Activated CD4-positive, alpha-beta T cell treated with anti-CD3 and anti-CD28 coated beads, Interleukin-2, amount 10 ng/mL, durations not matched to agents 24 days and 14 days (primary cell): ENCODE measurements at regions of chr18 and their contacts with region 1.

Region 1: GRCh38 chr18:57833443-57834101 is 30.5 kb upstream of the ATP8B1 start:
- DNase-seq: peak; percentile 74
- H3K4me3 Mint-ChIP-seq: peak overlapping the region; percentile 70
- H3K27ac Mint-ChIP-seq: peak overlapping the region; percentile 46
- H3K4me1 Mint-ChIP-seq: peaks cover 31% of the 10 kb centered on the region
- H3K27me3 Mint-ChIP-seq: peaks cover 15% of the 10 kb centered on the region

Region 2: DNA sequence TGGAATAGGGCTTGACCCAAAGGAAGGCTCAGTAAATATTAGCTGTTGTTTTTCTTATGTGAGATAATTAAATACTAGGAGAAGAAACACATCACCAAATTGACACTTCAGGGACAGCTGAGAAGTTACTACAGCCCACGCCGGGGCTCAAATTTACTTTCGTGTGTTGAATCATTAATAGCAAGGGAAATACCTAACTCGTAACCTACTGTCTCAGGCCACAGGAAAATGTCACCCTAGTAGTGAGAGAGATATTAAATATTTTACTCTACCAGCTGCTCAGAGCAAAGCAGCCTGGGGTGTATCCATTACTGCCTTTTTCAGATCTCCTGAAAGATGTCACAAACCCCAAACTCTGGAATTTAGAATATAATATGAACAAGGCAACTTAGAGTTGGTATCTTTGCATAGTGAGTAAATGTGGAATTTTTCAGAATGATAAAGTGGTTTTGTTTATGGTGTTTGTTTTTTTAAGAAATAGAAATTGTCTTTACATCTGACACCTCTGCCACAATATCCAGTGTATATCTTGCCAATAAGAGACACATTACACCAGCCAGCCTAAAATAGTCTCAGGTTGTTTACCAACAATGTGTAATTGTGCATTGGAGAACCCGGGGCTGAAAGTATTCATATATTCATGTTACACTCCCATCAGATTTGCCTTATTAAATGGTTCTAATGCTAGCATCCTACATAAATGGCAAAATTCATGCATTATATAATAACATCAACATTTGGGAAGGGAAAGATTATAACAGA is 78.8 kb before region 1 on chr18:
- intact Hi-C with region 1: loop called (anchors 5 kb)
- DNase-seq: no peak
- H3K4me3 Mint-ChIP-seq: no peak overlapping the region
- H3K27ac Mint-ChIP-seq: no peak overlapping the region
- H3K4me1 Mint-ChIP-seq: peaks cover 6% of the 10 kb centered on the region
- H3K27me3 Mint-ChIP-seq: no peaks in the 10 kb centered on the region